ENCODE measurements at regions of chr13 and their contacts with region 1.

Region 1: GRCh38 chr13:60427285-60427684 is 30.3 kb downstream of the TDRD3 start:
- DNase-seq: no peak
- ATAC-seq: no peak

Region 2: GRCh38 chr13:60347690-60348089 is 79.6 kb before region 1 on chr13:
- intact Hi-C with region 1: loop called in 1 of 2 experiments (anchors 10 kb)
- DNase-seq: no peak
- ATAC-seq: no peak

Measured in left colon (tissue), 2 donors.